ENCODE measurements at regions of chr20 and their contacts with region 1.

Region 1: DNA sequence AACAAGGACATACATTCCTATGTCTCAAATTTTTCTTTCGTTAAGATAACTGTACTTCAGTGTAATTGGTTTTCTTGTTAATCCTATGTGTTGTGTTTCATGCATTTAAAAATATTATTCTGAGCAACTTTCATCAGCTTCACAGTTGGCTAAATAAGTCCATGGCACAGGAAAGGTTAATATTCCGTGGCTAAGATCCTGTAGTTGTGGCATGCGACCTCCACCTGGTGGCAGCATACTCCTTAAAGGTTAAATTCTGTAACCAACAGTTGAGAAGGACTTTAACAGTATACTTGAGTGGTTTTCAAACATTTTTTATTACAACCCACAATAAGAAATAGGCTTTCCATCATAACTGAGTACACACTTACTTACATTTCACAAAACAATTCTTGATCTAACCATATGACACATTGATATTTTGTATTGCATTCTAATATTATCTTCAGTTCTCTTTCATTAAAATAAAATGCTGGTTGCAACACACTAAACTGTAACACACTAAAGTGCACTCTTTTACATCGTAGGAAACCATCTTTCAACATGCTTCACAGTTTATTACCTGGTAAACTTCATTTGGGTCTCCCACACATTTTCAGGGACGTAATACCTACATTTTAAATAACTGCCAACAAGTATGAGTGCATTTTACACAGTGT is 118.3 kb downstream of the SLX4IP start:
- DNase-seq: peak; percentile 74
- H3K4me3 Mint-ChIP-seq: no peak overlapping the region
- H3K27ac Mint-ChIP-seq: no peak overlapping the region
- H3K4me1 Mint-ChIP-seq: peaks cover 37% of the 10 kb centered on the region
- H3K27me3 Mint-ChIP-seq: no peaks in the 10 kb centered on the region

Region 2: GRCh38 chr20:10316582-10316981 is 236.9 kb before region 1 on chr20:
- CTCF ChIA-PET with region 1: no interaction called
- intact Hi-C with region 1: loop called (anchors 10 kb)
- DNase-seq: peak; percentile 41
- H3K4me3 Mint-ChIP-seq: no peak overlapping the region
- H3K27ac Mint-ChIP-seq: no peak overlapping the region
- H3K4me1 Mint-ChIP-seq: no peaks in the 10 kb centered on the region
- H3K27me3 Mint-ChIP-seq: peaks cover 25% of the 10 kb centered on the region

Region 3: GRCh38 chr20:10647465-10647864 is 94.0 kb after region 1 on chr20:
- CTCF ChIA-PET with region 1: no interaction called
- intact Hi-C with region 1: loop called (anchors 2 kb)
- DNase-seq: peak; percentile 10
- H3K4me3 Mint-ChIP-seq: no peak overlapping the region
- H3K27ac Mint-ChIP-seq: no peak overlapping the region
- H3K4me1 Mint-ChIP-seq: no peaks in the 10 kb centered on the region
- H3K27me3 Mint-ChIP-seq: peaks cover 5% of the 10 kb centered on the region

Region 4: DNA sequence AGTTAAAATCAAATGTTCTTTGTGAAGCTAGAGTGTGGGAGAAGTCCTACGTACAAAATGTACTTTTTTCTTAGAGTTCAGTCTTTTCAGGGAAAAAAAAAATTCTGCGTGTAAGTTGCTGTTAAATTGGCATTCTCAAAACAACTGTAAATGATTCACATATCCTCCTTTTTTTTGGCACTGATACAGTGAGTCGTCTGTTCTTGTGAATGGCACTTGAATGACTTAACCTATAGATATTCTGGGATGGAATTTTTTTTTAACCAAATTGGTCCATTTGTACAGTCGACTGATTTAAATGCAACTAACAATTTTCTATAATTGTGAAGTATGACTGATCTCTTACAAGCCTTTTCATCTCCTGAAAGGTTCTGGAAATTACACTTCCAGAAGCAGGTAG is 125.8 kb after region 1 on chr20:
- CTCF ChIA-PET with region 1: no interaction called
- intact Hi-C with region 1: no loop called
- DNase-seq: no peak
- H3K4me3 Mint-ChIP-seq: no peak overlapping the region
- H3K27ac Mint-ChIP-seq: no peak overlapping the region
- H3K4me1 Mint-ChIP-seq: peaks cover 4% of the 10 kb centered on the region
- H3K27me3 Mint-ChIP-seq: peaks cover 30% of the 10 kb centered on the region

Region 5: DNA sequence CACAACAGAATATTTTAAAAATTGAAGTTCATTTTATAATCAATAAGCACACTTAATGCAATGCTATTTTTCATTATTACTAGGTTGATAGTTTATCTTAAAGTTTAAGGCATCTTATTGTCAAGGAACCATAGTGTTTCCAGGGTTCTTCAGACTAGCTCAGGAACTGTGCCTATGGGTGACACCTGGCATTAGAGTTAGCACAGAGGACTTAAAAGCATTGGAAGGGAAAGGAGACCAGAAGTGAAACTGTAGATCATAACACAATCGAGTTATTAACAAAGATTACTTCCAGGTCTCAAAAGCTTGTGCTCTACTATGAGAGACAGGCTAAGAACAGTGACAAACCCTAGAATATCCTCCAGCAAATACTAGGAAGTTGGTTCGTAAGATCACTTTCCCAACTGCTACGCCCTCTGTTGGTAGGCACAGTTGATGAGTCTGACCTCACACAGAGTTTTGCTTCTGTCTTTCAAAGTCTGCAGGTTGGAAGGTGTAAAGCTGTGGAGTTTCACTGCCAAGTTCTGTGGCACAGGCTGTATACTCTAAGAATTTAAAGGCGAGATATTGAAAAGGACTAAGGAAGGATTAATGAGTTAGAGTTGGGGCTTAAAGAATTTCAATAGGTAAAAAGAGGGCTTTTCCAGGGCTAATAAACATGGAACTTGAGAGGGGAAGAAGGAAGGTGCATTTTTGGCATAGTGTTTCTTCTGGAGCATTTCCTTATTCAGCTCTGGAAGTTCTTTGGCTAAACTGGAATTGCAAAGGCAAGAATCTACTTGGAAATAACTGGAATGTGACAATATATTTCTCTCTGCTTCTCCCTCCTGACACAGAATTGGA is 651.7 kb after region 1 on chr20:
- CTCF ChIA-PET with region 1: interaction called, 4 read pairs
- intact Hi-C with region 1: loop called (anchors 1 kb)
- DNase-seq: peak; percentile 43
- H3K4me3 Mint-ChIP-seq: no peak overlapping the region
- H3K27ac Mint-ChIP-seq: no peak overlapping the region
- H3K4me1 Mint-ChIP-seq: no peaks in the 10 kb centered on the region
- H3K27me3 Mint-ChIP-seq: no peaks in the 10 kb centered on the region

Region 6: DNA sequence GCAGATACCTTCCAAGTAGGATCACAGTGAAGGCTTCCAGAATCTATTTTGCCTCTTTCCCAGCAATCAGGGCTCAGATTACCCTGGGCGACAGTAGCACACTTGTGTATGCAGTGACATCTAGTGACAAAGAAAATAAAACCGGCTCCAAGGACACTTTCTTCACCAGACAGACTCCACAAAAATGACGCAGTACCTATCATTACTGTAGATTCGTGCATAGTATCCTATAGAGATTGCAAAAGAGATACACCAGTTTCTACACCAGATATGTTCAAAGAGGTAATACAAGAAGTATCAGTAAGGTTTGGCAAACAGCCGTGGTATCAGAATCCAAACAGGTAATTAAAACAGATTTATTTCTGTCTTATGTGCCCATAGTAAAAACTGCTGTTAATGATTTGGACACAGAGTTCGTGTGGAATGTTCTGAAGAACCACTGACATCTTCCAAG is 720.7 kb after region 1 on chr20:
- CTCF ChIA-PET with region 1: no interaction called
- intact Hi-C with region 1: loop called (anchors 5 kb)
- DNase-seq: no peak
- H3K4me3 Mint-ChIP-seq: no peak overlapping the region
- H3K27ac Mint-ChIP-seq: no peak overlapping the region
- H3K4me1 Mint-ChIP-seq: no peaks in the 10 kb centered on the region
- H3K27me3 Mint-ChIP-seq: no peaks in the 10 kb centered on the region

Region 7: DNA sequence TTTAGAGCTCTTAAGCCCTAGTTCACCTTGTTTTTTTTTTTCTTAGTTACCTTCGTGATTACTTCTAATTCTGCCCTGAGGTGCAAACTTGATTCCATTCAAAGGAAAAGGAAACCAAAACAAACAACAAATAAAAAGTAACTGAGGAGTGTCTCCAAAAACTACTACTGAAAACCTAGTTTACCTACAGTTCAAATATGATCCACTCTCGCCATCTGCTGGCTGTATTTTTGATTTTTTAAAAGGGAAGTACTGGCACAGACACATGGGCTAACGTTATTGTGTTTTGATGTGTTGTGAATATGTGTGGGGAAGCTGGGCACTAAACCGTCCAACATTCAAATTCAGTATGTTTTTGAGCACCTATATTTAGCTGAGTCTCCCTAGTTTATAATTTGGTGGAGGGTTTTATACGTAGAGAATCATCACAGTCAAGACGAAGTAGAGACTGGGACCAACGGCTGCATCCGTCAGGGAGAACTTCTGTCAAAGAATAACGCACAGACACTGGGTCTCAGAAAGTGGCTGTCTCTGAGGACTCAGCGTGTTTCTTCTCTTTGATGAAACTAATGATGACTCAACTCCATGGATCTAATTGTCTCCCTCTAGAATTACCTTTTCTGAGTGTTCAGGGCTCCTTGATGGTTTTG is 990.7 kb after region 1 on chr20:
- CTCF ChIA-PET with region 1: no interaction called
- intact Hi-C with region 1: loop called (anchors 1 kb)
- DNase-seq: peak; percentile 35
- H3K4me3 Mint-ChIP-seq: no peak overlapping the region
- H3K27ac Mint-ChIP-seq: no peak overlapping the region
- H3K4me1 Mint-ChIP-seq: no peaks in the 10 kb centered on the region
- H3K27me3 Mint-ChIP-seq: peaks cover 4% of the 10 kb centered on the region